Cardiac septum (tissue), 1 donor: ENCODE measurements at regions of chr16 and their contacts with region 1.

Region 1: DNA sequence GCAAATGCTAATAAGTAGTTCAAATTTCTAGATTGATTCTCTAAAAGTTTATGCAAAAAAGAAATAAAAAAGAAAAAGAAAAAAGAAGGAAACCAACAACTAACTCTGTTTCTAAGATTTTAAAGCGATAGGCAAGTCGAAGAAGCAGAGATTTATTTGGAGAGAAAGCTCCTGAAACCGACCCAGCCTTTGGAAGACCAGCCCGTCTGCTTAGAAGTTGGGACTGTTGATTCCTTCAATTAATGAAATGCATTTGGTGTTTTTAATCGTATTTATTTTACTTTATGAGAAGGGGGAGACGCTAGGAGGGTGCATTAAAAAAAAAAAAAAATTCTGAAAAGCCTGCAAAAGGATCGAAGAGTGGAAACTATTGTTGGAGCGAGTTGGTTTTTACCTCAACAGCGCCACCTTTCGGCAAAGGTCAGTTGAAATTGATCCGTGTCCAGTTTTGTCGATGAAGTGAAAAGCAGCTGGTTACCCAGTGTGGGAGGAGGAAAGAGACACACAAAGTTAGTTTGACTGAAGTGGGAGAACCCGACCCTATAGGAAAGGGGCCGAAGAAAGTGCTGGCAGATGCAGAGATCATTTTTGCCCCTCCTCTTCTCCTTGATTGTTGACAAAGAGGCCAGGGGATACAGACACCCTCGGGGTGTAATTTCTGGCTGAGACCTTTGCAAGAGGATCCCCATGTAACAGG is 1.5 kb upstream of the MAF start:
- DNase-seq: peak; percentile 80

Region 2: GRCh38 chr16:78925083-78925767 is 676.9 kb before region 1 on chr16:
- intact Hi-C with region 1: loop called (anchors 2 kb)
- DNase-seq: no peak

Region 3: DNA sequence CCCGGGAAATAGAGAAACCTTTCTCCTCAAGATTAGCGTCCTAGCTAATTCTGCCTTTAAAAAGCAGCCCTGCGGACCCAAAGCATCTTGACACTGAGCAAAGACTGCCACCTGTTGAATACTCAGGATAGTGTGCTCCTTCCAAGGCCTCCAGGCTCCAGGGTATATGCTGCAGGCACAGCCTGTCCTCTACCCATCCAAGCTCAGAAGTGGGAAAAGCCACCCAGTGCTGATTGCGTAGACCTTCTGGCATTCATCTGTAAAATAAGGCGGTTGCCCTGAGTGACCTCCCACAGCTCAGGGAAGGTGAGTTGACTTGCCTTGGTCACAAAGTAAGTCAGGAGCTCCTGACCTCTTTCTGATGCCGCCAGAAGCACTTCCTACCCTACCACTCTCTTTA is 482.6 kb after region 1 on chr16:
- intact Hi-C with region 1: loop called (anchors 5 kb)
- DNase-seq: no peak